Panc1 (cell line): ENCODE measurements at regions of chr12 and their contacts with region 1.

Region 1: DNA sequence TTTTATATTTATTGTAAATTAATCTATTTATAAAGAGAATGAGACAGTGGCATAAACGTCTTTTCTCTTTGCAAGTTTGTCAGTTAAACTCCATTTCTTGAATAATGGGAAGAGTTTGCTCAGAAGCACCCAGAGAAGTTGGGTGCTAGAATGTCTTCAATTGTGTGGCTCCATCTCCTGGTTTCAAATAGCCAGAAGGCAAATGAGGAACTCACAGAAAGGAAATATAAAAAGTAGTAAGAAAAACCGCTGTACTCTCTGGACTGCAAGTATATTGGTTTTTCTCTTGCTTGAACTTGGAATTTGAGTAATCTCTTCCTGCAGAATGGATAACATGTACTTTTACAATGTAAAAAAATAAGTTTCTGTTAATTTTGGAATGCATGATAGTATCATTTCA is 217.5 kb downstream of the DPY19L2 start:
- DNase-seq: no peak
- ATAC-seq: no peak
- H3K4me3 ChIP-seq: no peak overlapping the region
- H3K27ac ChIP-seq: no peak overlapping the region
- H3K4me1 ChIP-seq: no peaks in the 10 kb centered on the region
- H3K27me3 ChIP-seq: peaks cover 7% of the 10 kb centered on the region
- CTCF ChIP-seq: no peak

Region 2: DNA sequence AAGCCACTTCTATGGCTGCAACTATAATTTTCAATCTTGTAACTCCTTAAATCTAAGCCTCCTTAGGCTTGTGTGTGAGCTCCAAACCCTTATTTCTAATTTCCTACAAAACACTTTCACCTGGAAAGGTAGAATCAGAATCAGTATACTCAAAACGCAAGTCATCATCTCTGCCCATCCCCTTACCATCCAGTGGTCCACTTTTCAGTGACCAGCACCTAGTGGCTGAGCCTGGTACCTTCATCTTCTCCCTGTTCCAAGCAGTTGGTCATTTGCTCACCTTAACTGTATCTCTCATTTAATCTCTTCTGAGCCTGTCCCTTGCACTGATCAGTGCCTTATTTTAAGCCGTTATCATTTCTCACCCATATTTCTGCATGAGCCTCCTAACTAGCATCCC is 623.8 kb before region 1 on chr12:
- CTCF ChIA-PET with region 1: no interaction called
- POLR2A ChIA-PET with region 1: no interaction called
- in situ Hi-C with region 1: no loop called
- intact Hi-C with region 1: no loop called
- DNase-seq: no peak
- ATAC-seq: no peak
- H3K4me3 ChIP-seq: no peak overlapping the region
- H3K27ac ChIP-seq: no peak overlapping the region
- H3K4me1 ChIP-seq: no peaks in the 10 kb centered on the region
- H3K27me3 ChIP-seq: no peaks in the 10 kb centered on the region
- CTCF ChIP-seq: peak; percentile 23; the same call in 1 of the 2 replicates

Region 3: GRCh38 chr12:63480186-63480585 is 29.4 kb after region 1 on chr12:
- CTCF ChIA-PET with region 1: no interaction called
- POLR2A ChIA-PET with region 1: interaction called, 15 read pairs
- in situ Hi-C with region 1: no loop called
- intact Hi-C with region 1: no loop called
- DNase-seq: no peak
- ATAC-seq: no peak
- H3K4me3 ChIP-seq: no peak overlapping the region
- H3K27ac ChIP-seq: no peak overlapping the region
- H3K4me1 ChIP-seq: no peaks in the 10 kb centered on the region
- H3K27me3 ChIP-seq: peaks cover 13% of the 10 kb centered on the region
- CTCF ChIP-seq: no peak